ENCODE measurements at regions of chr2 and their contacts with region 1.

Region 1: GRCh38 chr2:88590998-88591613 is 36.2 kb downstream of the EIF2AK3 start:
- H3K4me3 Mint-ChIP-seq: no peak overlapping the region
- H3K27ac Mint-ChIP-seq: no peak overlapping the region
- H3K4me1 Mint-ChIP-seq: no peaks in the 10 kb centered on the region
- H3K27me3 Mint-ChIP-seq: no peaks in the 10 kb centered on the region

Region 2: DNA sequence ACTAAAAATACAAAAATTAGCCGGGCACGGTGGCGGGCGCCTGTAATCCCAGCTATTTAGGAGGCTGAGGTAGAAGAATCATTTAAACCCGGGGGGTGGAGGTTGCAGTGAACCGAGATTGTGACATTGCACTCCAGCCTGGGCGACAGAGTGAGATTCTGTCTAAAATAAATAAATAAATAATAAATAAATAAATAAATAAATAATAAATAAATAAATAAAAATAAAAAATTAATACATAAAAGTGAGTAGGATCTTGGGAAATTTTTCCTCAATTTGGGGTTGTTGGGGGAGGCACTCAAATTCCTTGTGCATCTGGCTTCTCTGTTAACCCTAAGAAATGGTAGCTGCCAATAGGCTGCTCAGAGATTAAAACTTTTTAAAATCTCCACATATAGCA is 118.3 kb before region 1 on chr2:
- intact Hi-C with region 1: no loop called
- H3K4me3 Mint-ChIP-seq: no peak overlapping the region
- H3K27ac Mint-ChIP-seq: no peak overlapping the region
- H3K4me1 Mint-ChIP-seq: no peaks in the 10 kb centered on the region
- H3K27me3 Mint-ChIP-seq: peaks cover 2% of the 10 kb centered on the region

Region 3: DNA sequence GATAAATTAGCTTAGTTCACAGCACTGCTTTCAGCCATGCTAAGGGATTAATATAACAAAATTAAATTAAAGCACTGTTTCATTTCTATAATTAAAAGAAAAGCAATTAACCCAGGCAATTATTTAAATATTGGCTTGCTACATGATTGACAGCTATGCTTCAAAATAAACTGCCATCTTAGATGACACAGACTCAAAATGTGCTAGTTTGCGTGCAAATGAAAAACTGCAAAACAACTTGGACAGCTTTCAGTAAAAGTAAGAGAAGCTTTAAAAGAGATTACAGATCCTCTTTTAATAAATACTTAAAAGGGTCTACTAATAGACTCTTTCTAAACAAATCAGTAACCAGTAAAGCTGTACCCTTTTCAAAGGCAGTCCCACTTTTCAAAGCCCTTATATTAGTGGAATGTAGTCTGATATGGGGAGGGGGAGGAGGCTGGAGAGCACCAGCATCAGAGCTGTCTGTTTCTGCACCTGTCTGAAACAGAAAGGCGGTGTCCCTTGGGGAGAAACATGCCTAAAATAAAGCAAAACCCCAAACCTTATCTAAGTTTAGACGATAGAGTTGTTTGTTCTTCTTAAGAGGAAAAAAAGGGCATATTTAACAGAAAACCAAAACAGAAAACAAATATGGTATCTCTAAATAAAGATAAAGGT is 15.4 kb after region 1 on chr2:
- intact Hi-C with region 1: no loop called
- H3K4me3 Mint-ChIP-seq: no peak overlapping the region
- H3K27ac Mint-ChIP-seq: no peak overlapping the region
- H3K4me1 Mint-ChIP-seq: peaks cover 21% of the 10 kb centered on the region
- H3K27me3 Mint-ChIP-seq: no peaks in the 10 kb centered on the region

Region 4: GRCh38 chr2:88671786-88672427 is 80.8 kb after region 1 on chr2:
- intact Hi-C with region 1: loop called (anchors 1 kb)
- H3K4me3 Mint-ChIP-seq: no peak overlapping the region
- H3K27ac Mint-ChIP-seq: no peak overlapping the region
- H3K4me1 Mint-ChIP-seq: no peaks in the 10 kb centered on the region
- H3K27me3 Mint-ChIP-seq: peaks cover 2% of the 10 kb centered on the region